Prostate gland (tissue), 2 donors: ENCODE measurements at regions of chr6 and their contacts with region 1.

Region 1: DNA sequence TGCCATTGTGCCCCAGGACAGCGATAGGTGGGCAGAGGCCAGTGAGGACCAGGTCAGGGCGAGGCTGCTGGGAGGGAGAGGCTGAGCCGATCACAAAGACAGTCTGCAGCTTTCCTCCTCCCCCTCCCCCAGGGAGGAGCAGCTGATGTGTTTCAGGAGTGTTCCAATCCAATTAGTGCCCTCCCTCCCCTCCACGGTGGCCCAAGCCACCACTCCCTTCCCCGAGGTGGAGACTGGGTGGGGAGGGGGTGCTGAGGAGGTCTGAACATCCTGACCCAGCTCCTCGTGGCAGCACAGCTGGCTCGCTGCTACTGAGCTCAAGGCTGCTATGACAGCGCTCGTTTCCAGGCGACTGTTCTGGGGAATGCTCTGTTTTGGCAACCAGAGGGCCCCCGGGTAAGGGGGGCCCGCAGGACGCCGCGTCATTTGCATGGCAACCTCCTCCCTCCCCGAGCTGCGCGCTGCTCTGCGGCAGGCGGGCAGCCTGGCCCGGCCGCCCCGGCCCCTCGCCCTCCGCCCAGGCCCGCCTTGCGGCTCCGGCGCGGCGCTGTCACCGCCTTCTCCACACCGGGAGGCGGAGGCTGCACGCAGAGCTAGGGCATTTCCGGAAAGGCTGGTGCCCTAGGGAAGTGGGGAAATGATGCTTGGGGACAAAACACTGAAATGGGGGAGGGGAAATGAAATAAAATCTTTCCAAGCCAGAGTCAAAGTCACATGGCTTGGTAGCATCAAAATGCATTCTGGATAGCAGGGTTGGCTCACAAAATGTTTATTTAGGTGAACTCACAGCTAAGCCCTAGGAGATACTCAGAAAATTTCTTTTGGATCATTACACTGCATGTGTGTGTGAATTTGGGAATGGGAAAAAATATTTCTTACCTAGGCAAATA is 67.4 kb upstream of the PIM1 start:
- DNase-seq: peak; percentile 78
- H3K4me3 ChIP-seq: peak overlapping the region; percentile 29 to 36
- H3K27ac ChIP-seq: peak overlapping the region; percentile 60 to 66
- H3K4me1 ChIP-seq: peaks cover 15% of the 10 kb centered on the region
- H3K27me3 ChIP-seq: no peaks in the 10 kb centered on the region
- CTCF ChIP-seq: no peak
- POLR2A ChIP-seq: peak; percentile 35

Region 2: GRCh38 chr6:36701401-36701991 is 401.0 kb before region 1 on chr6:
- intact Hi-C with region 1: no loop called
- DNase-seq: no peak
- H3K4me3 ChIP-seq: no peak overlapping the region
- H3K27ac ChIP-seq: no peak overlapping the region
- H3K4me1 ChIP-seq: no peaks in the 10 kb centered on the region
- H3K27me3 ChIP-seq: no peaks in the 10 kb centered on the region
- CTCF ChIP-seq: peak in 1 of 4 experiments; percentile 17
- POLR2A ChIP-seq: no peak

Region 3: DNA sequence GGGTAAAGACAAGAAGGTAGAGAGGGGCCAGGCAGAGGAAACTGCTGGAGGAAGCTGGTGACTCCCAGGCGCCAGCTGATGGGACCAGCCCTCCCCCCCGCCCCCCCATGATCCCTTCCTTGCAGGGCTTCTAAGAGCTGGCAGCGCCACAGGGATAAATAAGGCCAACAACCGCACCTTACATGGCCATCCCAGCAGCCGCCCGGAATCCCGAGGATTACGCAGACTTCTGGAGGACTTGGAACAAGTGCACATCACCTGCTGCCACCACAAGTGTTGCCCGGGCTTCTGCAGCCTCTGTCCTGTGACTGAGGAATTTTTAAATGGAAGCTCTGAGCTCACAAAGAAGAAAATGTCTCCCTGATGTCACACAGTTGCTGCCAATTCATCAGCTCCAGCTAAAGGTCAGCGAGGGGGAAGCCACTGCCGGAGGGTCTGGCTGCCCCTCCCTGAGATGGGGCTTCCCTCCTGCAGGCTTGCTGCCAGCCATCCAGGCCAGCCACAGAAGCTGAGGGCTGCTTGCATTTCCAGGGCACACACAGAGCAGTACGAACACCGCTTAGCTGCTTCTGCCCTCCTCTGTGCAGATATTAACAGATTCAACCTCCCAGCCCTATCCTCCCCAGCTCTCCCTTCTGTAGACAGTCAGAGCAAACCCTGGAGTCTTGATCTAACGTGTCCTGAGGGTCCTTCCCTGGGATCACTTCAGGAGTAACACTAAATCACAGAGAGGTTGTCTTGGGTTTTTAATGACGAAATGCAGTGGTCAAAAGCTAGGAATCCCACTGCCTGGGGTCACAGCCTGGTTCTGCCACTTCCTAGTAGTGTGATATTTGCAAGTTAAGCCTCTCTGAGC is 28.8 kb after region 1 on chr6:
- intact Hi-C with region 1: loop called (anchors 2 kb)
- DNase-seq: peak; percentile 38
- H3K4me3 ChIP-seq: no peak overlapping the region
- H3K27ac ChIP-seq: peak overlapping the region; percentile 48 to 60
- H3K4me1 ChIP-seq: no peaks in the 10 kb centered on the region
- H3K27me3 ChIP-seq: no peaks in the 10 kb centered on the region
- CTCF ChIP-seq: no peak
- POLR2A ChIP-seq: no peak

Region 4: GRCh38 chr6:37554480-37554819 is 451.9 kb after region 1 on chr6:
- intact Hi-C with region 1: no loop called
- DNase-seq: no peak
- H3K4me3 ChIP-seq: no peak overlapping the region
- H3K27ac ChIP-seq: no peak overlapping the region
- H3K4me1 ChIP-seq: no peaks in the 10 kb centered on the region
- H3K27me3 ChIP-seq: no peaks in the 10 kb centered on the region
- CTCF ChIP-seq: no peak
- POLR2A ChIP-seq: no peak